ENCODE measurements at regions of chrX and their contacts with region 1.

Region 1: GRCh38 chrX:97728215-97728614 is 844.5 kb downstream of the RPA4 start:
- DNase-seq: no peak
- H3K4me3 ChIP-seq: no peak overlapping the region
- H3K27ac ChIP-seq: no peak overlapping the region
- H3K4me1 ChIP-seq: no peaks in the 10 kb centered on the region
- H3K27me3 ChIP-seq: peaks cover 0 to 6% of the 10 kb centered on the region in 2 donors
- CTCF ChIP-seq: no peak
- POLR2A ChIP-seq: no peak

Region 2: GRCh38 chrX:97405031-97405660 is 323.1 kb before region 1 on chrX:
- intact Hi-C with region 1: no loop called
- DNase-seq: no peak
- H3K4me3 ChIP-seq: no peak overlapping the region
- H3K27ac ChIP-seq: no peak overlapping the region
- H3K4me1 ChIP-seq: no peaks in the 10 kb centered on the region
- H3K27me3 ChIP-seq: peaks cover 0 to 28% of the 10 kb centered on the region in 2 donors
- CTCF ChIP-seq: no peak
- POLR2A ChIP-seq: no peak

Region 3: DNA sequence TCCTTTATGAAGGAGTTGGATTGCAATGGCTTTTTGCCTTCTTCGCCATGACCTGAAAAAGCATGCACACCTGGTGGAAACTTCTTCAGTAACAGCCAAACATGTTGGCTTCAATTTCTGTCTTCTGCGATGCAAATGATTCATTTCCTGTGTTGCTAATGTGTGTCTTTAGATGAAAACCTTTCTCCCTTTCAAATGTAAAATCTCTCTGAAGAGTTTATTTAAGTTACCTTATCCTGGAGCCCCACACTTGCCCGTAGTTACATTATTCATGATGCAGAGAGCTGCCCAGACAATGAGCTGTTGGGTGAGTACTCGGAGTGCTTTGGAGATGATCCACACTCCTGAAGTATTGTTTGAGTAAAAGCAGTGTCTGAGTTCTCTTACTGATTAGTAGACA is 256.4 kb after region 1 on chrX:
- intact Hi-C with region 1: loop called (anchors 5 kb)
- DNase-seq: no peak
- H3K4me3 ChIP-seq: no peak overlapping the region
- H3K27ac ChIP-seq: no peak overlapping the region
- H3K4me1 ChIP-seq: no peaks in the 10 kb centered on the region
- H3K27me3 ChIP-seq: peaks cover 0 to 7% of the 10 kb centered on the region in 2 donors
- CTCF ChIP-seq: no peak
- POLR2A ChIP-seq: no peak